MCF 10A (cell line): ENCODE measurements at regions of chr20 and their contacts with region 1.

Region 1: DNA sequence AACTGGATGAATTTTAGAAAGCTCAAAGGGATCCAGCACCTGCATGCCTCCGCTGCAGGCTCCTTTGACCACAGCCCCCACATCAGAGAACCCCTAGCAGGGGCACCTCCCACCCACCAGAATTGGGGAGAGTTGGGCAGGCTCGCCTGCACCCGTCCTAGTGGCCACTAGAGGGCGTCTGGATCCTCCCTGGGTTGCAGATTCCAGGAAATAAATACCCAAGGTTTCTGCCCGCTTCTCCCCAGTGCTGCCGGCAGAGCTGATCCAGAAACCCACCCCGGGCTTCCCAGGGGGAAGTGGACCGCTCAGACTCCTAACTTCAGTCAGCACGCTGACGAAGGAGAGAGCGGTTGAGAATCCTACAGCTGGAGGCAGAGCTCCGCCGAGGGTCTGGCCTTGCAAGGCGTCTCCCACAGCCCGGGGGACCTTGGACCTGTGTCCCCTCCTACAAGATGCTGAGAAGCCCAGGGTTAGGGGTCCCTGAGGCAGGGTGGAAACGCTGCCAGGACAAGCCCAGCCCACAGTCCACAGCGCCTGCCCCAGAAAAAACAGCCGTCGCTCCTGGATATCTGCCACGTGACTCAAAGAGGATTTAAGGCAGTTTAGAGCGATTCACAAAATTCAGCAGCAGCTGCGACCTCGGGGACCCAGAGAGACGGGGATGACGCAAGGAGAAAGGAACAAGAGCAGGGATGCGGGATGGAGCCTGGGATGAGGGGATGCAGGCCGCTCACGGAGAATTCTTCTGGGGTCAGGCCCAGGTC is 32.6 kb upstream of the PHACTR3 start:
- DNase-seq: peak; percentile 46
- H3K4me3 Mint-ChIP-seq: no peak overlapping the region
- H3K27ac Mint-ChIP-seq: no peak overlapping the region
- H3K4me1 Mint-ChIP-seq: no peaks in the 10 kb centered on the region
- H3K27me3 Mint-ChIP-seq: peaks cover 47% of the 10 kb centered on the region
- CTCF ChIP-seq: peak; percentile 93

Region 2: DNA sequence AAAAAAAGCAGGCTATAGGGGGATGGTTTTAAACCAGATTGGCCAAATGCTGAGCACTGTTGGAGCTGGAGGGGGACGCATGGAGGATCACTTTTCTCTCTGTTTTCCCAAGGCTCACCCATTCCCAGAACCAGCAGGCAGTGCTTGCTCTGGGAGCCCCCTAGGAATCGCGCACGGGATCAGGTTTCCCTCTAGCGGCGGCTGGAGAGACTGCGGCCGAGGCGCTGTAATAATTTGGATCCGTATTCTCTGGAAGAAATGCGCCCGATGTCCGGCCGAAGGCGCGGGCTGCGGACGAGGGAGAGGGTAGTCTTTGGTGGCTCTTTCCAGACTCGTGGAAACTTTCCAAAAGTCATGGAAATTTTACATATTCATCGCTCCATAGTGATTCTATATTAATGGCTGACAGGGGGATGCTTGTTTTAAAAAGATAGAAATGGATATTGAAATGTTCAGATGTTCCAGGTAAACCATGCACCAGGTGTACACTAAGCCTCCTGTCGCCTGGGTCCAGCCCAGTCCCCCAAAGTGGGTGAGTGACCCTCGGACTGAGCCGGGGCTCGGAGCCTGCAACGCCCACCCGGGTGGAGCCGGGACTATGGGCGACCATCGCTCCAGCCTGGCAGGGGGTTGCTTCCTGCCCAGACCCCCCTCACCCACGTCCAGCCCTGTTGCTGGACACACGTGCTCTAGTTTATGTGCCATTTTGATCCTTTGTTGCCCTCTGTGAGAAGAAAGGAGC is 46.1 kb before region 1 on chr20:
- CTCF ChIA-PET with region 1: interaction called, 13 read pairs
- POLR2A ChIA-PET with region 1: no interaction called
- intact Hi-C with region 1: no loop called
- DNase-seq: peak; percentile 57
- H3K4me3 Mint-ChIP-seq: no peak overlapping the region
- H3K27ac Mint-ChIP-seq: no peak overlapping the region
- H3K4me1 Mint-ChIP-seq: no peaks in the 10 kb centered on the region
- H3K27me3 Mint-ChIP-seq: peaks cover 86% of the 10 kb centered on the region
- CTCF ChIP-seq: peak; percentile 66

Region 3: DNA sequence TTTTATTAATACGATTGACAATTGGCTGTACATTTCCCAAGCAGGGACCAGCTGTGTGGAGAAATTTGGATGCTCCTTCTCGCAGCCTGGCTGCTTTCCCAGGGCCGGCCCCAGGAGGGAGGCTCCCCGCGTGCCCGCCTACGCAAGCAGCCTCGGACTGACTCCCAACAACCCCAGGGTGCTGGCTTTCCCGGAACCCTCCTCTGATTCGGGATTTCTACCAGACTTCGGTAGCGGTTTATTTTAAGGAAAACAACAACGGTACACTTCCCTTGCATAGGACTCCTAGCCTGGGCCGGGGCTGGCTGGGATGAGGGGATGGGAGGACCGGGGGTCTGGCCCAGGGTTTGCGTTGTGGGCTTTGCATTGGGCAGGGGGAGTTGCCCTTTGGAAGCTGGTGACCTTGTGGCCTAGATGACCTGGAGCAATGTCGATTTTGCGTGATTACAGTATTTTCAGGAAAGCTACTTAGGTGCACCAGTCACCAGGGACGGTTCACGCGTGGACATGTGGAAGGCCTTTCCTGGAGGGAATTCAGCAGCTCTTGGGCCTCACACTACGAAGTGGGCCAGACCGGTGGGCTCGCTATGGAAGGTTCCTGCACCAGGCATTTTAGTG is 11.8 kb after region 1 on chr20:
- CTCF ChIA-PET with region 1: interaction called, 165 read pairs
- POLR2A ChIA-PET with region 1: no interaction called
- intact Hi-C with region 1: no loop called
- DNase-seq: peak; percentile 47
- H3K4me3 Mint-ChIP-seq: no peak overlapping the region
- H3K27ac Mint-ChIP-seq: no peak overlapping the region
- H3K4me1 Mint-ChIP-seq: no peaks in the 10 kb centered on the region
- H3K27me3 Mint-ChIP-seq: peaks cover 41% of the 10 kb centered on the region
- CTCF ChIP-seq: no peak

Region 4: DNA sequence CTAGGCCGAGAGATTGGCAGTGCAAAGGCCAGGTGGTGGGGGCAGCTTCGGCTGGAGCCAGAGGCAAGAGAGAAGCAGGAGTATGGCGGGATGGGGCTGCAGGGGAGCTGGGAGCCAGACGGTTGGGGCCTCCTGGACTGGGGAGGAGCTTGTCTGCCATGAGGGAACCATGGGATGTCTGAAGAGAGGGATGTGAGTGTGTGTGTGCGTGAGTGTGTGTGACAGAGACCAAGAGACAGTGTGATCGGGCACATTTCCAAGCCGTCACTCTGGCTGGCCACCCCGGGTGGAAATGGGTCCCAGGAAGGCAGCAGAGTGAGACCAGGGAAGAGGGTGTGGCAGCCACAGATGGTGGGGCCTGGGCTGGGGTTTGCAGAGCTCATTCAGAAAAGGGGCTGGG is 46.4 kb after region 1 on chr20:
- CTCF ChIA-PET with region 1: interaction called, 14 read pairs
- POLR2A ChIA-PET with region 1: no interaction called
- intact Hi-C with region 1: no loop called
- DNase-seq: no peak
- H3K4me3 Mint-ChIP-seq: no peak overlapping the region
- H3K27ac Mint-ChIP-seq: no peak overlapping the region
- H3K4me1 Mint-ChIP-seq: no peaks in the 10 kb centered on the region
- H3K27me3 Mint-ChIP-seq: peaks cover 96% of the 10 kb centered on the region
- CTCF ChIP-seq: no peak

Region 5: DNA sequence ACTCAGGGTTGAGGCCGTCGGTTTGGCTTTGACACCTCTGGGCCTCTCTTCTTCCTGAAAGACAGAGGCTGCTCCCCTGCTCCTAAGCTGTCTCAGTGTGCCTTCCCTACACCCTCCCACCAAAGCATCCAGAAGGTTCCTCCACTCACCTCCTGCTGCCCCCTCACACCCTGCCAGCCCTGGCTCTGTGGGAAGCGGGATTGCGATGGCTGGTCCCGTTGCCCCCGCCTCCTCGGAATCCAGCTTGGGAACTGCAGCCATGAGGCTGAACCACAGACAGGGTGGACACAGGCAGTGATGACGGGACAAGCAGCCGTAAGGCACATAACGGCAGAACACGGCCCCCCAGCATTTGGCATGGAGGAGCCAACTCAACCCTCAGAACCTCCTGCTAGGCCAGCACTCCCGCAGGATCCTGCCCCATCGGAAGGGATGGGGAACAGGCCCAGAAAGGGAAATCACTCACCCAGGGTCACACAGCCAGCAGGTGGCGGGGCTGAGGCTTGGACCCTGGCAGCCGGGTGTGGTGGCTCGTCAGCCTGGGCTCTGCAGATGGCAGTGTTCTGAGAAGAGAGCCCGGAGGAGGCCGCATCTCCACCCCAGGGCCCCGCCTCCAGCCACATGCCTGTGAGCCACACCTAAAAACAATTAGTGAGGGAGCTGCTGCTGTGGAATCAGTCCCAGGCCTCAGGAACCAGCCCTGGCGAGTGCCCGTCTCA is 172.2 kb after region 1 on chr20:
- CTCF ChIA-PET with region 1: interaction called, 54 read pairs
- POLR2A ChIA-PET with region 1: no interaction called
- intact Hi-C with region 1: no loop called
- DNase-seq: peak; percentile 18
- H3K4me3 Mint-ChIP-seq: no peak overlapping the region
- H3K27ac Mint-ChIP-seq: no peak overlapping the region
- H3K4me1 Mint-ChIP-seq: no peaks in the 10 kb centered on the region
- H3K27me3 Mint-ChIP-seq: peaks cover 67% of the 10 kb centered on the region
- CTCF ChIP-seq: peak; percentile 20

Region 6: GRCh38 chr20:59850018-59850641 is 278.4 kb after region 1 on chr20:
- CTCF ChIA-PET with region 1: interaction called, 18 read pairs
- POLR2A ChIA-PET with region 1: no interaction called
- intact Hi-C with region 1: no loop called
- DNase-seq: peak; percentile 55
- H3K4me3 Mint-ChIP-seq: no peak overlapping the region
- H3K27ac Mint-ChIP-seq: no peak overlapping the region
- H3K4me1 Mint-ChIP-seq: peaks cover 13% of the 10 kb centered on the region
- H3K27me3 Mint-ChIP-seq: no peaks in the 10 kb centered on the region
- CTCF ChIP-seq: peak; percentile 70